Activated CD4-positive, alpha-beta T cell treated with anti-CD3 and anti-CD28 coated beads for 36 hours (primary cell): ENCODE measurements at regions of chr7 and their contacts with region 1.

Region 1: DNA sequence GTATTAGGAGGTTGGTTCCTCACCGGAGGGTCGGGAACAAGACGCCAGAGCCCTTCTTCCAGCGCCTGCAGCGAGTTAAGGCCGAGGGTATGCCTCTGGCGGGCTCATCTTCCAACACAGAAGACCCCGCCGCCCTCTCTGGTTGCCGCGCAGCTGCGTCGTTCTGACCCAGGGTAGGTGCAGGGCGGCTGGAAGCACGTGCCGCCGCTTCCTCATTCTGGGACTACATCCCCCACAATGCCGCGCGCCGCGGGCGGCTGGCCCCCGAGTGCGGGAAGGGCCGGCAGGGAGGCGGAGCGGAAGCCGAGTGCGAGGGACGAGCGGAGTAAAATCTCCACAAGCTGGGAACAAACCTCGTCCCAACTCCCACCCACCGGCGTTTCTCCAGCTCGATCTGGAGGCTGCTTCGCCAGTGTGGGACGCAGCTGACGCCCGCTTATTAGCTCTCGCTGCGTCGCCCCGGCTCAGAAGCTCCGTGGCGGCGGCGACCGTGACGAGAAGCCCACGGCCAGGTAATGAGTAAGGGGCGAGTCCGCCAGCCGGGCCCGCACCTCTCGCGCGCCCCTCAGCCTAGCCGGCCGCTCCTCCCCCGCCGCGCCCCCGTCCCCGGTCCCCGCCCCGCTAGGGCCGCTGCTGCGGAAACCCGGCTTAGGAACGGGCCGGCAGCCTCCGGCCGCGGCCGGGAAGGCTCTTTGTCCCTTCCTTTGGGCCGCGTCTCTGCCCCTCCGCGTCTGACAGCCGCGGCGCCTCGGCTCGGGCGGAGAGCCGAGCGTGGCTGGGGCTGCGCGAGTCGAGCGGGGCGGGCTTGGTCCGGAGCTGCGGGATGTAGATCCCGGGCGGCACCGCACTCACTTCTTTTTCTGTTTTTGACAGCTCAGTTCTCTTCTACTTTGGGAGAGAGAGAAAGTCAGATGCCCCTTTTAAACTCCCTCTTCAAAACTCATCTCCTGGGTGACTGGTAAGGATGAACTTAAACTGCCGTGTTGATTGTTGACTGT is at the start of gene CCDC126:
- DNase-seq: peak; percentile 91
- ATAC-seq: peak; percentile 57
- H3K4me3 Mint-ChIP-seq: peak within 1 kb of the TSS; percentile 81
- H3K27ac Mint-ChIP-seq: peak within 1 kb of the TSS; percentile 81
- H3K4me1 Mint-ChIP-seq: peaks cover 61% of the 10 kb centered on the region
- H3K27me3 Mint-ChIP-seq: peaks cover 5% of the 10 kb centered on the region
- total RNA-seq, gene CCDC126: 4.6 to 5.6 TPM

Region 2: GRCh38 chr7:22672846-22673652 is 924.3 kb before region 1 on chr7:
- CTCF ChIA-PET with region 1: no interaction called
- POLR2A ChIA-PET with region 1: no interaction called
- intact Hi-C with region 1: loop called in 1 of 2 experiments (anchors 10 kb)
- DNase-seq: no peak
- ATAC-seq: no peak
- H3K4me3 Mint-ChIP-seq: no peak overlapping the region
- H3K27ac Mint-ChIP-seq: no peak overlapping the region
- H3K4me1 Mint-ChIP-seq: peaks cover 56% of the 10 kb centered on the region
- H3K27me3 Mint-ChIP-seq: peaks cover 1% of the 10 kb centered on the region

Region 3: DNA sequence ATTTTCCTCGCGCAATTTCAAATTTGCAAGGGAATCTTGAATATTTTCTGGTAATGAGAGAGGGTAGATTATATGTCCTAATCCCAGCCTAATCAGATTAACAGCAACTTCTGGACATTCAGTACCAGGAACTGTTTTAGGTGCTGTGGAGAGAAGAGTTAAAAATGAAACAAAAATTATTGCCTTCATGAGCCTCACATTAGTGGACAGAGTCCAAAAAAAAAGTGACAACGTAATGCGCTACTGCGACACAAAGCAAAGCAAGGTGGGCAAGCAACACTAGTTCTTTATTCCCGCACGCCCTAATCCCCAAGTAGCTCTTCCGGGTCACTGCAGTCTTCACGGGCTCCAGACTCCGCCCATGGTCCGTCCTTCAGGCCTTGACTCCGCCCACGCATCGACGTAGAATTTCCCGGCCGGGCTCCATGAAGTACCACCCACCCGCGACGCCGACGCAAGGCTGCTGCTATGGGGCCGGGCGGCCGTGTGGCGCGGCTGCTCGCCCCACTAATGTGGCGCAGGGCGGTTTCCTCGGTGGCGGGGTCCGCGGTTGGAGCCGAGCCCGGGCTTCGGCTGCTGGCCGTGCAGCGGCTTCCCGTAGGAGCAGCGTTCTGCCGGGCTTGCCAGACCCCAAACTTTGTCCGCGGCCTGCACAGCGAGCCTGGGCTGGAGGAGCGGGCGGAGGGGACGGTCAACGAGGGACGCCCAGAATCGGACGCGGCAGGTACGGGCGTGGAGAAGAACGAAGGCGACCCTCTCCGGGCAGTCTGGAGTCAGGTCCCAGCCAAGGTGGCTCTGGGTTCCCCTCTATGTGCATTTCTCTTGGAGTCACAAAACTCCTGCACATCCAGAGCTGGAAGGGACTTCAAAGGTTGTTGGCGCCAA is 298.3 kb before region 1 on chr7 and contains the start of gene MALSU1:
- CTCF ChIA-PET with region 1: interaction called, 3 read pairs
- POLR2A ChIA-PET with region 1: no interaction called
- intact Hi-C with region 1: loop called in 1 of 2 experiments (anchors 2 kb)
- DNase-seq: peak; percentile 99
- ATAC-seq: peak; percentile 97
- H3K4me3 Mint-ChIP-seq: peak within 1 kb of the TSS; percentile 98
- H3K27ac Mint-ChIP-seq: peak within 1 kb of the TSS; percentile 97
- H3K4me1 Mint-ChIP-seq: peaks cover 38% of the 10 kb centered on the region
- H3K27me3 Mint-ChIP-seq: no peaks in the 10 kb centered on the region
- total RNA-seq, gene MALSU1: 97.7 to 98.4 TPM

Region 4: GRCh38 chr7:23474094-23474828 is 123.1 kb before region 1 on chr7:
- CTCF ChIA-PET with region 1: interaction called, 3 read pairs
- POLR2A ChIA-PET with region 1: no interaction called
- intact Hi-C with region 1: loop called in 1 of 2 experiments (anchors 2 kb)
- DNase-seq: peak; percentile 94
- ATAC-seq: peak; percentile 91
- H3K4me3 Mint-ChIP-seq: peak overlapping the region; percentile 63
- H3K27ac Mint-ChIP-seq: peak overlapping the region; percentile 38
- H3K4me1 Mint-ChIP-seq: peaks cover 26% of the 10 kb centered on the region
- H3K27me3 Mint-ChIP-seq: peaks cover 57% of the 10 kb centered on the region

Region 5: GRCh38 chr7:23893942-23894891 is 296.8 kb after region 1 on chr7:
- CTCF ChIA-PET with region 1: no interaction called
- POLR2A ChIA-PET with region 1: no interaction called
- intact Hi-C with region 1: loop called (anchors 1 to 10 kb)
- DNase-seq: peak; percentile 75
- ATAC-seq: peak; percentile 81
- H3K4me3 Mint-ChIP-seq: no peak overlapping the region
- H3K27ac Mint-ChIP-seq: peak overlapping the region; percentile 35
- H3K4me1 Mint-ChIP-seq: peaks cover 30% of the 10 kb centered on the region
- H3K27me3 Mint-ChIP-seq: peaks cover 19% of the 10 kb centered on the region

Region 6: GRCh38 chr7:24907311-24907886 is 1310.0 kb after region 1 on chr7:
- CTCF ChIA-PET with region 1: no interaction called
- POLR2A ChIA-PET with region 1: no interaction called
- intact Hi-C with region 1: loop called in 1 of 2 experiments (anchors 10 kb)
- DNase-seq: peak; percentile 47
- ATAC-seq: peak; percentile 85
- H3K4me3 Mint-ChIP-seq: no peak overlapping the region
- H3K27ac Mint-ChIP-seq: no peak overlapping the region
- H3K4me1 Mint-ChIP-seq: peaks cover 43% of the 10 kb centered on the region
- H3K27me3 Mint-ChIP-seq: no peaks in the 10 kb centered on the region